ENCODE measurements at regions of chr14 and their contacts with region 1.

Region 1: GRCh38 chr14:77862154-77862786 is 62.4 kb downstream of the ADCK1 start:
- DNase-seq: peak; percentile 87
- ATAC-seq: peak; percentile 89
- H3K4me3 Mint-ChIP-seq: no peak overlapping the region
- H3K27ac Mint-ChIP-seq: no peak overlapping the region
- H3K4me1 Mint-ChIP-seq: no peaks in the 10 kb centered on the region
- H3K27me3 Mint-ChIP-seq: no peaks in the 10 kb centered on the region
- CTCF ChIP-seq: peak; percentile 87

Region 2: GRCh38 chr14:77681196-77682157 is 180.8 kb before region 1 on chr14:
- CTCF ChIA-PET with region 1: no interaction called
- POLR2A ChIA-PET with region 1: no interaction called
- intact Hi-C with region 1: no loop called
- DNase-seq: no peak
- ATAC-seq: no peak
- H3K4me3 Mint-ChIP-seq: no peak overlapping the region
- H3K27ac Mint-ChIP-seq: no peak overlapping the region
- H3K4me1 Mint-ChIP-seq: peaks cover 8% of the 10 kb centered on the region
- H3K27me3 Mint-ChIP-seq: no peaks in the 10 kb centered on the region
- CTCF ChIP-seq: no peak

Region 3: DNA sequence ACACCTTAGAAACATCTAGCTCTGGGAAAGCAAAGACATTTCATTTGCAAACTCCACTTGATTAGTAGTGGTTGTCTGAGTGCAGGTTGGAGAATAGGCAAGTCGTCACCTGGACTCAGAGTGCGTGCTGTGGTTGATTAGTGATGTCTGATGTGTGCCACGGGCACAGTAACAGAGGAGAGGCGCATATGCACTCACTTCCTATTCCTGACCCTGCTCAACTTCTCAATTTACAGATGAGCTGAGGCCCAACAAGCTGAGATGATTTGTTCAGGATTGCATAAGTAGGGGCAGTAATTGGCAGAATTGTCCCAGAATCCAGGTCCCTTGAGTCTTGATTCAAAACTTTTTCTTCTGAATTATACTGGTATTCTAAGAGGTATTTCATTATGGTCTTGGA is 17.5 kb before region 1 on chr14:
- CTCF ChIA-PET with region 1: interaction called, 10 read pairs
- POLR2A ChIA-PET with region 1: no interaction called
- intact Hi-C with region 1: no loop called
- DNase-seq: no peak
- ATAC-seq: no peak
- H3K4me3 Mint-ChIP-seq: no peak overlapping the region
- H3K27ac Mint-ChIP-seq: no peak overlapping the region
- H3K4me1 Mint-ChIP-seq: no peaks in the 10 kb centered on the region
- H3K27me3 Mint-ChIP-seq: no peaks in the 10 kb centered on the region
- CTCF ChIP-seq: no peak

Region 4: GRCh38 chr14:77872983-77873382 is 10.7 kb after region 1 on chr14:
- CTCF ChIA-PET with region 1: interaction called, 38 read pairs
- POLR2A ChIA-PET with region 1: no interaction called
- intact Hi-C with region 1: no loop called
- DNase-seq: no peak
- ATAC-seq: no peak
- H3K4me3 Mint-ChIP-seq: no peak overlapping the region
- H3K27ac Mint-ChIP-seq: no peak overlapping the region
- H3K4me1 Mint-ChIP-seq: no peaks in the 10 kb centered on the region
- H3K27me3 Mint-ChIP-seq: no peaks in the 10 kb centered on the region
- CTCF ChIP-seq: no peak

Region 5: DNA sequence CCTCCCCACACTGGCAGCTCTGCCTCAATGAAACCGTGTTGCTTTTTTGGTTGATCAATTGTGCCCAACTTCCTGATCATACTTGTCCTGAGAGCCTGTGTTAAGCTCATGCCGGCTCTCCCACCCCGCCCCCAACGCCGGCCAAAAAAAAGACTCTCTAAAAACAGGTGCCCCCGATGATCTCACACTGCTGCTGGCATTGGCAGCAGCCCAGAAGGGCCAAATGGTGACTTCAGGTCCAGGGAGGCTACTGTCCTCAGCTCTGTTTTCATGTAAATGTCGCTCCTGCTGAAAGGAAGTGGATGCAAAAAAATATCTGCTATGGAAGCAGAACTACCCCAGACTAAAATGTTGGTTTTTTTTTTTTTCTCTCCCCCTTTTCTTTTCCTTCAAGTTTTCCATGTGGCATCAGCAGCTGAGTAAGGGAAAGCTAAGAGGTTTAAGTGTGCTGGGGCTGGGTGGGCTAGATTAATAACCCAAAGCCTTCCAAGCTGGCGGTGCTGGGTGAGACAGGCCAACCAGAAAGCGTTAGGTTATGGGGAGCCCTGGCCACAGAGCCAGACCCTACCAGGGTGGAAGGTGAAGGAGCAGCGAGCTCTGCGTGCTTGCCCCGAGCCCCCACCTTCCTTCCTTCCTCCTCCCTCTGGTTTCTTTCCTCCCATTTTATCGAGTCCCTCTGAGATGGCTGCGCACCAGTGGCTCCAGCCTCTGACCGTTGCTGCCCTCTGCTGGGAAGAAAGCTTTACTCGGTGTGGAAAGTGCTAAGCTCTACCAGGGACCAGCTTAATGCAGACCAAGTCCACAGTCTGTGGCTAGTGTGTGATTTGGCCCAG is 704.0 kb after region 1 on chr14:
- CTCF ChIA-PET with region 1: interaction called, 20 read pairs
- POLR2A ChIA-PET with region 1: no interaction called
- intact Hi-C with region 1: no loop called
- DNase-seq: peak; percentile 80
- ATAC-seq: peak; percentile 87
- H3K4me3 Mint-ChIP-seq: no peak overlapping the region
- H3K27ac Mint-ChIP-seq: no peak overlapping the region
- H3K4me1 Mint-ChIP-seq: peaks cover 3% of the 10 kb centered on the region
- H3K27me3 Mint-ChIP-seq: peaks cover 2% of the 10 kb centered on the region
- CTCF ChIP-seq: peak; percentile 58

Region 6: GRCh38 chr14:78598041-78598920 is 736.0 kb after region 1 on chr14:
- CTCF ChIA-PET with region 1: interaction called, 6 read pairs
- POLR2A ChIA-PET with region 1: no interaction called
- intact Hi-C with region 1: loop called (anchors 10 kb)
- DNase-seq: peak; percentile 57
- ATAC-seq: peak; percentile 83
- H3K4me3 Mint-ChIP-seq: no peak overlapping the region
- H3K27ac Mint-ChIP-seq: no peak overlapping the region
- H3K4me1 Mint-ChIP-seq: no peaks in the 10 kb centered on the region
- H3K27me3 Mint-ChIP-seq: peaks cover 8% of the 10 kb centered on the region
- CTCF ChIP-seq: peak; percentile 78